ENCODE measurements at regions of chr15 and their contacts with region 1.

Region 1: DNA sequence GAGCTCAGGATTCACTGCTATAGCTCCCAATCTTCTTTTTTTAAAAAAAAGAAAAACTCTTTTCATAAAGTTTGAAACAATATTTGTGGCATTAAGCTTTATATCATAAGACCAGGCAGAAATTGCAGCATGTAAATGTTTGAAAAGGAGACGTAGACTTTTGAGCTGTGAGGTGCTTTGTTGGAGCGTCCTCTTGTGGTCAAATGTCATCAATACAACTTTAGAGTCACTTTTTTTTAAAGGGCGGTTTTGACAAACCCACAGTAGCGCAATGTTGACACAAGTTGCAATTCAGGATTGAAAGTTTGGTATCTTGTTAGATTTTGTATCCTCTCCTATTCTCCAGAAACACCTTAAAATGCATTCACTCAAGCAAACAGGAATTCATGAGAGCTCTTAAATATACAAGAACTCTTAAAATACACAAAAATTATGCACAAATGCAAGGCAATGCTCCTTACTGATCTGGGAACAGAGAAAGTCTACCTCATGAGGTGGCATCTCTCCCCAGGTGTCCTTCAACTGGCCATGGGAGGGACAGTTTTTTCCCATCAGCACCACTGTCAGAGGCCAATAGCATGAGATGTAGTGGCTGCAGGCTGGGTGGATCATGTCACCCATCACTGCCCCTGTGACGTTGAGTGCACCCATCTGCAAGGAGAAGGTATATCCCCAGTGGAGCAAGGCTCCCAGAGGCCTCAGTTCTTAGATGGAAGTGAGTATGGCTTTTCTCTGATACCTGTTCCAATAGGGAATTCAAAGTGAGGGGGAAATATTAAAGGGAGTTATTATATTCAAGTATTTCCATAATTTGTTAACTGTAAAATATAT is 70.7 kb downstream of the ANXA2 start:
- DNase-seq: peak; percentile 20
- H3K4me3 ChIP-seq: no peak overlapping the region
- H3K27ac ChIP-seq: no peak overlapping the region
- H3K27me3 ChIP-seq: peaks cover 32% of the 10 kb centered on the region
- CTCF ChIP-seq: peak; percentile 88

Region 2: GRCh38 chr15:59688841-59689625 is 638.0 kb before region 1 on chr15 and contains the start of gene BNIP2:
- CTCF ChIA-PET with region 1: interaction called, 178 read pairs
- POLR2A ChIA-PET with region 1: no interaction called
- DNase-seq: peak; percentile 94
- H3K4me3 ChIP-seq: peak within 1 kb of the TSS; percentile 94
- H3K27ac ChIP-seq: peak within 1 kb of the TSS; percentile 99
- H3K27me3 ChIP-seq: no peaks in the 10 kb centered on the region
- CTCF ChIP-seq: no peak
- polyA plus RNA-seq, gene BNIP2: 45.4 and 65.9 TPM in 2 replicates

Region 3: GRCh38 chr15:59725172-59725486 is 601.9 kb before region 1 on chr15:
- CTCF ChIA-PET with region 1: interaction called, 74 read pairs
- POLR2A ChIA-PET with region 1: no interaction called
- DNase-seq: no peak
- H3K4me3 ChIP-seq: no peak overlapping the region
- H3K27ac ChIP-seq: no peak overlapping the region
- H3K27me3 ChIP-seq: peaks cover 4% of the 10 kb centered on the region
- CTCF ChIP-seq: no peak

Region 4: GRCh38 chr15:60315878-60316277 is 11.2 kb before region 1 on chr15:
- CTCF ChIA-PET with region 1: interaction called, 20 read pairs
- POLR2A ChIA-PET with region 1: no interaction called
- DNase-seq: no peak
- H3K4me3 ChIP-seq: no peak overlapping the region
- H3K27ac ChIP-seq: no peak overlapping the region
- H3K27me3 ChIP-seq: peaks cover 10% of the 10 kb centered on the region
- CTCF ChIP-seq: no peak

Region 5: GRCh38 chr15:60343221-60343970 is 16.4 kb after region 1 on chr15:
- CTCF ChIA-PET with region 1: interaction called, 40 read pairs
- POLR2A ChIA-PET with region 1: no interaction called
- DNase-seq: no peak
- H3K4me3 ChIP-seq: no peak overlapping the region
- H3K27ac ChIP-seq: peak overlapping the region; percentile 47
- H3K27me3 ChIP-seq: no peaks in the 10 kb centered on the region
- CTCF ChIP-seq: no peak